ENCODE measurements at regions of chr1 and their contacts with region 1.

Region 1: DNA sequence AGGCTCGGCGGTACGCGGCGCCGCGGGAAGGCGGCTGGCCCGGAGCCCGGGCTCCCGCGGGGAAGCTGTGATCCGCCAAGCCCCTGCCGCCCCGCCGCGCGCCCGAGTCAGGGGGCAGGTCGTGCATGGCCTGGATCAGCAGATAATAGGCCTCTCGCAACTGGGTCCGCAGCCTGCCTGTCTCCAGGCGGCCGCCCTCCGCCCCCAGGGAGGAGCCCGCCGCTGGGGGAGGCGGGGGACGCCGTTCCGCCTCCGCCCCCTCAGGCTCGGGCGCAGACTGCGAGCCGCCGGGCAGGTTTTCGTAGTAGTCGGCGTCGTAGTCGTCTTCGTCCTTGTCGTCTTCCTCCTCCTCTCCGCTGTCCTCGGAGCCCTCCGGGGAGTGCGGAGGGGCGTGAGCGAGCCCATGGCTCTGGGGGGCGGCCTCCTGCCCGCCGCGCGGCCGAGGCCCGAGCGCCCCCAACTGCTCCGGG is at the start of gene SYDE2:
- DNase-seq: no peak
- ATAC-seq: peak; percentile 83
- H3K4me3 ChIP-seq: peak within 1 kb of the TSS; percentile 74 to 76
- H3K27ac ChIP-seq: peak within 1 kb of the TSS; percentile 85
- H3K4me1 ChIP-seq: peaks cover 6 to 16% of the 10 kb centered on the region in 2 experiments
- H3K27me3 ChIP-seq: no peaks in the 10 kb centered on the region
- CTCF ChIP-seq: no peak
- POLR2A ChIP-seq: no peak
- RAD21 ChIP-seq: no peak
- total RNA-seq, gene SYDE2: 5.3 TPM

Region 2: GRCh38 chr1:84996846-84997666 is 203.8 kb before region 1 on chr1 and contains the start of gene MCOLN2:
- CTCF ChIA-PET with region 1: no interaction called
- POLR2A ChIA-PET with region 1: no interaction called
- RAD21 ChIA-PET with region 1: no interaction called
- intact Hi-C with region 1: no loop called
- DNase-seq: no peak
- ATAC-seq: peak; percentile 94
- H3K4me3 ChIP-seq: peak within 1 kb of the TSS; percentile 56 to 60
- H3K27ac ChIP-seq: peak within 1 kb of the TSS; percentile 27; the same call in 1 of the 2 replicates
- H3K4me1 ChIP-seq: peaks cover 3 to 23% of the 10 kb centered on the region in 2 experiments; a peak in 2 of 4 replicates
- H3K27me3 ChIP-seq: no peaks in the 10 kb centered on the region
- CTCF ChIP-seq: no peak
- POLR2A ChIP-seq: no peak
- RAD21 ChIP-seq: no peak
- total RNA-seq, gene MCOLN2: 11.3 TPM

Region 3: GRCh38 chr1:85048296-85049064 is 152.4 kb before region 1 on chr1 and contains the start of gene MCOLN3:
- CTCF ChIA-PET with region 1: no interaction called
- POLR2A ChIA-PET with region 1: no interaction called
- RAD21 ChIA-PET with region 1: no interaction called
- intact Hi-C with region 1: loop called (anchors 1 kb)
- DNase-seq: peak; percentile 19
- ATAC-seq: peak; percentile 87
- H3K4me3 ChIP-seq: peak within 1 kb of the TSS; percentile 62 to 82
- H3K27ac ChIP-seq: peak within 1 kb of the TSS; percentile 60
- H3K4me1 ChIP-seq: peaks cover 3 to 12% of the 10 kb centered on the region in 2 experiments; a peak in 3 of 4 replicates
- H3K27me3 ChIP-seq: no peaks in the 10 kb centered on the region
- CTCF ChIP-seq: no peak
- POLR2A ChIP-seq: peak; percentile 33
- RAD21 ChIP-seq: no peak
- total RNA-seq, gene MCOLN3: 10.7 TPM

Region 4: GRCh38 chr1:85184245-85184644 is 16.7 kb before region 1 on chr1:
- CTCF ChIA-PET with region 1: no interaction called
- POLR2A ChIA-PET with region 1: no interaction called
- RAD21 ChIA-PET with region 1: no interaction called
- intact Hi-C with region 1: loop called (anchors 2 kb)
- DNase-seq: no peak
- ATAC-seq: no peak
- H3K4me3 ChIP-seq: no peak overlapping the region
- H3K27ac ChIP-seq: no peak overlapping the region
- H3K4me1 ChIP-seq: no peaks in the 10 kb centered on the region
- H3K27me3 ChIP-seq: no peaks in the 10 kb centered on the region
- CTCF ChIP-seq: no peak
- POLR2A ChIP-seq: no peak
- RAD21 ChIP-seq: no peak

Region 5: DNA sequence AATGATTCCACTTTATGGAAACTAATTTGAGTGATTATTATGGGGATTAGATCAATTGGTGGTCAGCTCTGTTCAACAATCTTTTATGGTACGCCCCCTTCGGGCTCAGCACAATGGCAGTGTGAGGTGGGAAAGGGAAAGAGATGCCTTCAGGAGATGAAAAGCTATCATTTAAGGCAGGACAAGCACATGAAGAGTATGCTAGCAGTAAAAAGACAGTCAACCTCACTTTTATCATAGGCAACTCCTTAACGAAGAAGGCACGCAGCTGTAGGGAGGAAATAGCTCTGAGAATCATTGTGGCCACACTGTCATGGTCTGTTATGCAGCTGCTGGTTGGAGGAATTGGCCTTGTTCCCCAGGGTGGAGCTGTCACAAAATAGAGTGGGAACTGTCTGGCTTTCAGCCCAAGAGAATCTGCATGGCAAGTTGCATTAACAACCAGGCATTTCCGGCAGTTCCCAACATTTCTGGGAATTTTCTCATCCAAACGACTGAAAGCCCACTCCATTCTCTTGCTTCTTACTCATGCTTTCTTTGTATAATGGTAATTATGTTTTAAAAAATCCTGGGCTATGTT is 129.9 kb after region 1 on chr1:
- CTCF ChIA-PET with region 1: no interaction called
- POLR2A ChIA-PET with region 1: no interaction called
- RAD21 ChIA-PET with region 1: no interaction called
- intact Hi-C with region 1: no loop called
- DNase-seq: no peak
- ATAC-seq: no peak
- H3K4me3 ChIP-seq: peak overlapping the region in 1 of 2 experiments; percentile 15; a peak in 1 of 4 replicates
- H3K27ac ChIP-seq: peak overlapping the region; percentile 42
- H3K4me1 ChIP-seq: peaks cover 52 to 54% of the 10 kb centered on the region in 2 experiments
- H3K27me3 ChIP-seq: no peaks in the 10 kb centered on the region
- CTCF ChIP-seq: no peak
- POLR2A ChIP-seq: no peak
- RAD21 ChIP-seq: no peak

Measured in HCT116 (cell line).